A549 (cell line): ENCODE measurements at regions of chr7 and their contacts with region 1.

Region 1: DNA sequence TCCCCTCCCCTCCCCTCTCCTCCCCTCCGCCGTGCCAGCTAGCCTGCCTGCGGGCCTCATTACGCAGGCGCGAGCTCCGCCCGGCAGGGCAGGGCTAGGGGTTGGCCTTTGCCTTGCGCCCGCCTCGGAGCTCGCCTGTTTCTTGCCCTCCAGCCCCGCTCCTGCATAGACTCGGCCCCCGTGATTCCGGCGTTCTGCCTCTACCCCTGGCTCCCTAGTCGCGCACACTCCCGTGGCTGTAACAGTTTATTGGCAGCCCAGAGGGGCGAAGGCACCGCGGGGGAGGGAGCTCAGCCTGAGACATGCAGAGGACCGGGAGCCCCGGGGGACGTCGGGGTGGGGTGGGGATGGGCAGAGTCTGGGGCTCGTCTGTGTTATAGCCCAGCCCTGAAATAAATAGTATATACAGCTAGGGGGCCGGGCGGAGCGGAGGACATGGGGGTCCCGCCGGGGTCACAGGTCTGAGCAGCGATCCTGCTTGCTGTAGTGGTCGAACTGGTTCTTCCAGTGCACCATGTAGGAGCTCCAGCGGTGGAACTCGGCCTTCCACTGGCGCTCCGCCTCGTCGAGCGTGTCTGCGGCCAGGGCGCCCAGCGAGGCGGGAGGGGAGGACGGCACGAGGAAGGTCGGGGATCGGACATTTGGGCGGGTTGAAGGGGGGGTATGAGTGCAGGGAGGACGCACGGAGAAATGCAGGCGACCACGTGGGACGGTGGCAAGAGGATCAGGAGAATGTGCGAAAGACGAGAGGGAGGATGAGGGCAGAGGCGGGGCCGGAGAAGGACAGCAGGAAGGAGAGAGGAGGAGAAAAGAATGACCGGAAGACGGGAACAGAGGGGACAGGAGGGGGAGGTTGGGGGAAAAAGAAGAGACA is 483 bp upstream of the UFSP1 start:
- DNase-seq: peak; percentile 93 to 96
- ATAC-seq: peak; percentile 68 to 91
- H3K4me3 ChIP-seq: peak overlapping the region; percentile 92
- H3K27ac ChIP-seq: peak overlapping the region; percentile 86 to 95
- H3K4me1 ChIP-seq: peaks cover 34% of the 10 kb centered on the region
- CTCF ChIP-seq: no peak
- EP300 ChIP-seq: no peak
- POLR2A ChIP-seq: peak; percentile 74
- RAD21 ChIP-seq: no peak

Region 2: GRCh38 chr7:100902638-100903037 is 12.6 kb after region 1 on chr7:
- CTCF ChIA-PET with region 1: interaction called, 20 read pairs
- POLR2A ChIA-PET with region 1: interaction called, 3 read pairs
- DNase-seq: no peak
- ATAC-seq: no peak
- H3K4me3 ChIP-seq: no peak overlapping the region
- H3K27ac ChIP-seq: no peak overlapping the region
- H3K4me1 ChIP-seq: no peaks in the 10 kb centered on the region
- CTCF ChIP-seq: no peak
- EP300 ChIP-seq: no peak
- POLR2A ChIP-seq: no peak
- RAD21 ChIP-seq: no peak

Region 3: DNA sequence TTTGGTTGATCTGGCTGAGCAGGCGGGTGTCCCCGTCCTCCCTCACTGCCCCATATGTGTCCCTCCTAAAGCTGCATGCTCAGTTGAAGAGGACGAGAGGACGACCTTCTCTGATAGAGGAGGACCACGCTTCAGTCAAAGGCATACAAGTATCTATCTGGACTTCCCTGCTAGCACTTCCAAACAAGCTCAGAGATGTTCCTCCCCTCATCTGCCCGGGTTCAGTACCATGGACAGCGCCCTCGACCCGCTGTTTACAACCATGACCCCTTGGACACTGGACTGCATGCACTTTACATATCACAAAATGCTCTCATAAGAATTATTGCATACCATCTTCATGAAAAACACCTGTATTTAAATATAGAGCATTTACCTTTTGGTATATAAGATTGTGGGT is 168.4 kb after region 1 on chr7:
- CTCF ChIA-PET with region 1: interaction called, 43 read pairs
- POLR2A ChIA-PET with region 1: interaction called, 4 read pairs
- DNase-seq: peak; percentile 43 to 51
- ATAC-seq: peak in 1 of 2 experiments; percentile 50; a peak in 2 of 6 replicates
- H3K4me3 ChIP-seq: no peak overlapping the region
- H3K27ac ChIP-seq: no peak overlapping the region
- H3K4me1 ChIP-seq: no peaks in the 10 kb centered on the region
- CTCF ChIP-seq: no peak
- EP300 ChIP-seq: no peak
- POLR2A ChIP-seq: no peak
- RAD21 ChIP-seq: no peak

Region 4: DNA sequence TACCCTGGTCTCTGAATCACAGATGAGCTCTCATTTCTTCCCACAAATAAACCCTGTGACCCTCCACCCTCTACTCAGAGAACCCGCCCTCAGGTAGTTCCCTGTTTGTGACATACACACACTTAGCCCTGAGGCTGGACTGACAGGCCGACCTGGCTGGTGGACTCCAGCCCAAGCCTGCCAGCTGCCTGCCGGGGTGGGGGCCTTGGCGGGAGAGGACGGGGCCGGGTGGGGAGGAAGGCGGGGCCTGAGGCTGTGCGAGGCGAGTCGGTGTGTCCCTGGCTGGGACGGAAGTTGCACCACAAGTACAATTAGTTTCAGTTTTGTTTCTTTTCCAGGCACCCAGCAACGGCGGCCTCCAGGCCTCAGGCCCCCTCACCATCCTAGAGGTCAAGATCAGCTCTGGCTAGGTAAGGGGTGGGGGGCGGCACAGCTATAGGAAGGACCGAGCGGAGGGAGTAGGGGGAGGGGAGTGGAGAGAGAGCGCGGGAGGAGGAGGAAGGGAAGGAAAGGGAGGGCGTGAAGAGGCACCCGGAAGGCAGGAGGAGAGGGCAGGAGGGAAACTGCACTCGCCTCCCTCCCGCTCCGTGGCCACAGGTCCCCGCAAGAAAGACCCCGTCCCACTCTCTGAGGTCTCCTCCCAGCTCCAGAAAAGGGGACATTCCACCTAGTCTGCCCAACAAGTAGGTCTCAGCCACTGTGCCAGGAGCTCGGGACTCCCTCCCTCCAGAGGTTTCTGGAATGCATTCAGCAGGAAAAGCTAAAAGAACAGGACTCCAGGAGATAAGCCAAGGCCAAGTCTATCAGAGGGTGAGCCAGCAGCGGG is 195.4 kb after region 1 on chr7 and contains the start of gene TRIM56:
- CTCF ChIA-PET with region 1: interaction called, 71 read pairs
- POLR2A ChIA-PET with region 1: interaction called, 11 read pairs
- DNase-seq: peak; percentile 84 to 89
- ATAC-seq: peak; percentile 90 to 92
- H3K4me3 ChIP-seq: peak within 1 kb of the TSS; percentile 55
- H3K27ac ChIP-seq: peak within 1 kb of the TSS; percentile 86 to 96
- H3K4me1 ChIP-seq: peaks cover 16% of the 10 kb centered on the region
- CTCF ChIP-seq: no peak
- EP300 ChIP-seq: no peak
- POLR2A ChIP-seq: peak; percentile 65
- RAD21 ChIP-seq: no peak; a peak in 1 of 5 replicates
- polyA plus RNA-seq, gene TRIM56: 3.9 and 5.2 TPM in 2 replicates

Region 5: DNA sequence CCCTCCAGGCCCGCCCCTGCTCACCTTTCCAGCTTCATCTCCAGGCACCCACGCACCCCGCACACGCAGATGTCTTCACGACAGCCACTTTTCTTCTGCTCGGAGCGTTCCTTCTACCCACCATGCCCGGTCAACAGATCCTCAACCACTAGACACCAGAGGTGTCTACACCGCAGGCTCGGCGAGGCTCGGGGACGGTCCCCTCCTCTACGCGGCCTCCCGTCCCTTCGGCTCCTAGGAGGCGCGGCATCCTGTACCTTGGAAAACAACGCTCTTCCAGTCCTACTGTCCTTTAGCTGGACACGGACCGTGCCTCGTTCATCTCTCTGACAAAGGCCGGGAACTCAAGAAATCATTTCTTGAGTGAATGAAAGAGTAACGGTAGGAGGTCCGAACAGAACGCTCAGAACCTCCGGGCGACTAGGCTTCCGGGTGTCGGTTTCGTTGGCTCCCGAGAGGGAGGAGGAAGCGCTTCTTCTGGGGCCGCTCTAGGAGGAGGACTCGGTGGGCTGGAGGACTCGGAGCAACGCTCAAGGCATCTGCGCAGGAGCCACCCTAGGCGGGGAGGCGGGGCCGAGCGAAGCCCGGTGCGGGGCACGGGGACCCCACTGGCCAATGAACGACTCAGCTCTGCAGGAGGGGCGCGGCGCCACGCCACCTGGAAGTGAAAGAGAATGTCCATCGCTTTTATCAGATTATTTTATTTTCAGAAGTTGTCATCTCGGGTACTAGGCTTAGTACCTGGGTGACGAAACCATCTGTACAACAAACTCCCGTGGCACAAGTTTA is 362.1 kb after region 1 on chr7:
- CTCF ChIA-PET with region 1: no interaction called
- POLR2A ChIA-PET with region 1: interaction called, 14 read pairs
- DNase-seq: peak; percentile 96 to 99
- ATAC-seq: peak; percentile 99 to 100
- H3K4me3 ChIP-seq: peak overlapping the region; percentile 84
- H3K27ac ChIP-seq: peak overlapping the region; percentile 77 to 84
- H3K4me1 ChIP-seq: peaks cover 10% of the 10 kb centered on the region; the same call in 2 of the 3 replicates
- CTCF ChIP-seq: no peak
- EP300 ChIP-seq: no peak
- POLR2A ChIP-seq: peak; percentile 46
- RAD21 ChIP-seq: no peak